CD4-positive, alpha-beta memory T cell (primary cell): ENCODE measurements at regions of chr2 and their contacts with region 1.

Region 1: GRCh38 chr2:190534310-190535120 is at the start of gene NEMP2:
- DNase-seq: peak; percentile 75 to 87 (median 81)
- H3K4me3 ChIP-seq: peak within 1 kb of the TSS; percentile 82 to 89
- H3K4me3 Mint-ChIP-seq: peak within 1 kb of the TSS; percentile 94 to 99 (median 98)
- H3K27ac ChIP-seq: peak within 1 kb of the TSS; percentile 87
- H3K27ac Mint-ChIP-seq: peak within 1 kb of the TSS; percentile 99 to 100 (median 100)
- H3K4me1 ChIP-seq: peaks cover 46% of the 10 kb centered on the region
- H3K4me1 Mint-ChIP-seq: peaks cover 42 to 66% (median 52%) of the 10 kb centered on the region in 4 donors
- H3K27me3 ChIP-seq: no peaks in the 10 kb centered on the region
- H3K27me3 Mint-ChIP-seq: no peaks in the 10 kb centered on the region
- total RNA-seq, gene NEMP2: 20.7 to 21.2 TPM

Region 2: GRCh38 chr2:189783927-189784867 is 750.3 kb before region 1 on chr2 and contains the starts of genes ORMDL1 and PMS1:
- CTCF ChIA-PET with region 1: no interaction called
- POLR2A ChIA-PET with region 1: interaction called, 6 read pairs
- intact Hi-C with region 1: loop called (anchors 10 kb)
- DNase-seq: peak; percentile 93 to 96 (median 96)
- H3K4me3 ChIP-seq: peak within 1 kb of the TSS; percentile 71 to 74
- H3K4me3 Mint-ChIP-seq: peak within 1 kb of the TSS; percentile 92 to 97 (median 94)
- H3K27ac ChIP-seq: peak within 1 kb of the TSS; percentile 93
- H3K27ac Mint-ChIP-seq: peak within 1 kb of the TSS; percentile 96 to 97 (median 97)
- H3K4me1 ChIP-seq: peaks cover 52% of the 10 kb centered on the region
- H3K4me1 Mint-ChIP-seq: peaks cover 43 to 64% (median 54%) of the 10 kb centered on the region in 4 donors
- H3K27me3 ChIP-seq: no peaks in the 10 kb centered on the region
- H3K27me3 Mint-ChIP-seq: no peaks in the 10 kb centered on the region
- total RNA-seq, gene ORMDL1: 187 to 190 TPM
- total RNA-seq, gene PMS1: 29.1 to 35.1 TPM

Region 3: GRCh38 chr2:190408538-190409271 is 125.8 kb before region 1 on chr2:
- CTCF ChIA-PET with region 1: no interaction called
- POLR2A ChIA-PET with region 1: interaction called, 55 read pairs
- intact Hi-C with region 1: loop called (anchors 1 kb)
- DNase-seq: peak; percentile 78 to 86 (median 84)
- H3K4me3 ChIP-seq: peak overlapping the region; percentile 67 to 78
- H3K4me3 Mint-ChIP-seq: peak overlapping the region; percentile 89 to 95 (median 92)
- H3K27ac ChIP-seq: peak overlapping the region; percentile 96
- H3K27ac Mint-ChIP-seq: peak overlapping the region; percentile 96 to 99 (median 98)
- H3K4me1 ChIP-seq: peaks cover 54% of the 10 kb centered on the region
- H3K4me1 Mint-ChIP-seq: peaks cover 37 to 52% (median 41%) of the 10 kb centered on the region in 4 donors
- H3K27me3 ChIP-seq: no peaks in the 10 kb centered on the region
- H3K27me3 Mint-ChIP-seq: no peaks in the 10 kb centered on the region

Region 4: GRCh38 chr2:190415794-190416775 is 118.4 kb before region 1 on chr2:
- CTCF ChIA-PET with region 1: no interaction called
- POLR2A ChIA-PET with region 1: interaction called, 12 read pairs
- intact Hi-C with region 1: no loop called
- DNase-seq: peak in 2 of 5 donors; percentile 16 to 18
- H3K4me3 ChIP-seq: no peak overlapping the region
- H3K4me3 Mint-ChIP-seq: peak overlapping the region; percentile 21 to 75 (median 62)
- H3K27ac ChIP-seq: peak overlapping the region; percentile 56
- H3K27ac Mint-ChIP-seq: peak overlapping the region; percentile 25 to 95 (median 81)
- H3K4me1 ChIP-seq: peaks cover 64% of the 10 kb centered on the region
- H3K4me1 Mint-ChIP-seq: peaks cover 45 to 91% (median 72%) of the 10 kb centered on the region in 4 donors
- H3K27me3 ChIP-seq: no peaks in the 10 kb centered on the region
- H3K27me3 Mint-ChIP-seq: no peaks in the 10 kb centered on the region

Region 5: DNA sequence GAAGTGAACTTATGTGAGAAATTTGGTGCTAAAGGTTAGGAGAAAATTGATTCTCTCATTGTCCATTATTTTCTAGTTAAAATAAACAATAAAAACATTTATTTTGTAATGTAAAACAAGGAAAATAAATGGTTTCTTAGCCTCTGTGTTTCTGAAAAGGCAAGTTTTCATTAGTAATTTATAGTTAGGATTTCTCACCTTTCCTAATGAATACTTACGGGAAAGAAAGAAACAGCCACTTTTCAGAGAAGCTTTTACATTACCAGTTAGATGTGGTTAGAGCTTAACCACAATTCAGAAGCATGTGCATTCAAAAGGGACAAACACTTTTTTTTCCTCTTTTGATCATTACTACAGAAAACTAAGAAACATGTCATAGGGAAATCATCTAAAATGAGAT is 18.8 kb before region 1 on chr2:
- CTCF ChIA-PET with region 1: interaction called, 6 read pairs
- POLR2A ChIA-PET with region 1: interaction called, 37 read pairs
- intact Hi-C with region 1: loop called (anchors 1 kb)
- DNase-seq: peak in 4 of 5 donors; percentile 53 to 65 (median 58)
- H3K4me3 ChIP-seq: no peak overlapping the region
- H3K4me3 Mint-ChIP-seq: peak overlapping the region in 7 of 8 donors; percentile 22 to 68 (median 50)
- H3K27ac ChIP-seq: no peak overlapping the region
- H3K27ac Mint-ChIP-seq: peak overlapping the region; percentile 8 to 84 (median 62)
- H3K4me1 ChIP-seq: peaks cover 37% of the 10 kb centered on the region
- H3K4me1 Mint-ChIP-seq: peaks cover 20 to 45% (median 33%) of the 10 kb centered on the region in 4 donors
- H3K27me3 ChIP-seq: no peaks in the 10 kb centered on the region
- H3K27me3 Mint-ChIP-seq: no peaks in the 10 kb centered on the region

Region 6: GRCh38 chr2:190578158-190579057 is 43.9 kb after region 1 on chr2:
- CTCF ChIA-PET with region 1: interaction called, 3 read pairs
- POLR2A ChIA-PET with region 1: interaction called, 14 read pairs
- intact Hi-C with region 1: no loop called
- DNase-seq: peak in 3 of 5 donors; percentile 9 to 19 (median 14)
- H3K4me3 ChIP-seq: no peak overlapping the region
- H3K4me3 Mint-ChIP-seq: peak overlapping the region; percentile 18 to 73 (median 49)
- H3K27ac ChIP-seq: no peak overlapping the region
- H3K27ac Mint-ChIP-seq: peak overlapping the region; percentile 13 to 75 (median 49)
- H3K4me1 ChIP-seq: peaks cover 37% of the 10 kb centered on the region
- H3K4me1 Mint-ChIP-seq: peaks cover 25 to 41% (median 32%) of the 10 kb centered on the region in 4 donors
- H3K27me3 ChIP-seq: no peaks in the 10 kb centered on the region
- H3K27me3 Mint-ChIP-seq: no peaks in the 10 kb centered on the region